Transverse colon (tissue), 4 donors: ENCODE measurements at regions of chr17 and their contacts with region 1.

Region 1: GRCh38 chr17:69390795-69391501 is 23.5 kb upstream of the MAP2K6 start:
- DNase-seq: peak; percentile 10
- H3K4me3 ChIP-seq: peak overlapping the region in 2 of 4 donors; percentile 5 to 25
- H3K27ac ChIP-seq: peak overlapping the region; percentile 19 to 63 (median 34)
- H3K4me1 ChIP-seq: peaks cover 0 to 12% (median 2%) of the 10 kb centered on the region in 4 donors
- H3K27me3 ChIP-seq: no peaks in the 10 kb centered on the region
- CTCF ChIP-seq: no peak
- EP300 ChIP-seq: no peak
- POLR2A ChIP-seq: no peak

Region 2: GRCh38 chr17:69501591-69502468 is 110.9 kb after region 1 on chr17:
- in situ Hi-C with region 1: loop called in 2 of 4 experiments (anchors 10 to 25 kb)
- intact Hi-C with region 1: no loop called
- DNase-seq: peak; percentile 47
- H3K4me3 ChIP-seq: peak overlapping the region in 3 of 4 donors; percentile 12 to 46 (median 17)
- H3K27ac ChIP-seq: peak overlapping the region; percentile 79 to 84 (median 82)
- H3K4me1 ChIP-seq: peaks cover 14 to 53% (median 24%) of the 10 kb centered on the region in 4 donors
- H3K27me3 ChIP-seq: no peaks in the 10 kb centered on the region
- CTCF ChIP-seq: no peak
- EP300 ChIP-seq: no peak
- POLR2A ChIP-seq: no peak

Region 3: GRCh38 chr17:69828087-69828486 is 437.1 kb after region 1 on chr17:
- in situ Hi-C with region 1: no loop called
- intact Hi-C with region 1: no loop called
- DNase-seq: no peak
- H3K4me3 ChIP-seq: no peak overlapping the region
- H3K27ac ChIP-seq: no peak overlapping the region
- H3K4me1 ChIP-seq: no peaks in the 10 kb centered on the region
- H3K27me3 ChIP-seq: no peaks in the 10 kb centered on the region
- CTCF ChIP-seq: no peak
- EP300 ChIP-seq: no peak
- POLR2A ChIP-seq: no peak